Activated CD4-positive, alpha-beta T cell treated with anti-CD3 and anti-CD28 coated beads for 36 hours (primary cell): ENCODE measurements at regions of chr9 and their contacts with region 1.

Region 1: GRCh38 chr9:3331817-3332216 is 194.0 kb downstream of the RFX3 start:
- DNase-seq: peak; percentile 17
- ATAC-seq: no peak
- H3K4me3 Mint-ChIP-seq: no peak overlapping the region
- H3K27ac Mint-ChIP-seq: no peak overlapping the region
- H3K4me1 Mint-ChIP-seq: peaks cover under 1% of the 10 kb centered on the region
- H3K27me3 Mint-ChIP-seq: no peaks in the 10 kb centered on the region

Region 2: GRCh38 chr9:3441197-3441816 is 109.5 kb after region 1 on chr9:
- CTCF ChIA-PET with region 1: interaction called, 5 read pairs
- POLR2A ChIA-PET with region 1: no interaction called
- intact Hi-C with region 1: loop called in 1 of 2 experiments (anchors 10 kb)
- DNase-seq: peak; percentile 66
- ATAC-seq: peak; percentile 70
- H3K4me3 Mint-ChIP-seq: no peak overlapping the region
- H3K27ac Mint-ChIP-seq: no peak overlapping the region
- H3K4me1 Mint-ChIP-seq: peaks cover 8% of the 10 kb centered on the region
- H3K27me3 Mint-ChIP-seq: no peaks in the 10 kb centered on the region

Region 3: DNA sequence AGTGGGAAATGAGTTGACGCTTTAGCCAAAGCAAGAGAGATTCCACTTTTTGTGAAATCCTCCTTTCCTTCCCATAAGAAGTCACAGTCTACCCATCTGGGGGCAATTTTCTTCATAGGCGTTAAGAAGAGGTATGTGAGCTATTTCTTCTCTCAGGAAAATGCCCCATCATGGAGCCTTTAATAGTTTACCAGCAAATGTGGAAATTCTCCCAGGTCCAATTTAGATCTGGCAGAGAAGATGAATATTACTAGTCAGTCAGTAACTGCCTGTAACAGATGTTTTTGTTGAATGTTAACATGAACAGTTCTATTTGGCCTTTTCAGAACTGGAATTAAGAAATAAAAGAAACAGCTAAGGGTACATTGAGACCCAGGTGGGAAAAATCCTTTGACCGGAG is 350.4 kb after region 1 on chr9:
- CTCF ChIA-PET with region 1: no interaction called
- POLR2A ChIA-PET with region 1: no interaction called
- intact Hi-C with region 1: no loop called
- DNase-seq: no peak
- ATAC-seq: no peak
- H3K4me3 Mint-ChIP-seq: no peak overlapping the region
- H3K27ac Mint-ChIP-seq: no peak overlapping the region
- H3K4me1 Mint-ChIP-seq: no peaks in the 10 kb centered on the region
- H3K27me3 Mint-ChIP-seq: no peaks in the 10 kb centered on the region